ENCODE measurements at regions of chr15 and their contacts with region 1.

Region 1: GRCh38 chr15:72312605-72313447 is 7.1 kb downstream of the CELF6 start:
- DNase-seq: no peak
- H3K4me3 ChIP-seq: no peak overlapping the region
- H3K27ac ChIP-seq: no peak overlapping the region
- H3K27me3 ChIP-seq: peaks cover 18% of the 10 kb centered on the region
- CTCF ChIP-seq: peak; percentile 80

Region 2: DNA sequence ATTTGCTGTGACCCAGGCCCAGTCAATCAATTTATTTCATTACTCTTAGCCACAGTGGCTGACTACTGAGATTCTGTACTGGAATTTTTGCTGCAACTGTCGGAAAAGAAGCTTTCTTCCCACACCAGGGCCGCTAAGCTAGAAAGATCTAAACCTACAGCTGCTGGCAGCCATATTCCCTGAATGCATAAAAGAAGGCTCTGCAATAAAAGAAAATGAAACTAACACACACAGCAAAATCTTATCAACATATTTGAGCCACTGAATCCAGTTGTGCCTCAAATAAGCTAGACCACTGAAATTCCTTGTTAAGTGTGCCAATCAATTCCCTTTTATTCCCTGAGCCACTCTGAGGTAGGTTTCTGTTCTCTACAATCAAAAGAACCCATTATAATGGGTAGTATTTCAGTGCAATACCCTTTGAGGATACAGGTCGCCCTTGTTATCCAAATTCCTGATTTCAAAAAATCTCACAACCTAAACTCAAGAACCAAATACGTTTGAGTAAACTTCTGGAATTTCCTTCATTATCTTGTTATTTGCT is 255.2 kb before region 1 on chr15:
- CTCF ChIA-PET with region 1: no interaction called
- POLR2A ChIA-PET with region 1: no interaction called
- DNase-seq: no peak
- H3K4me3 ChIP-seq: peak overlapping the region; percentile 10; the same call in 1 of the 2 replicates
- H3K27ac ChIP-seq: no peak overlapping the region
- H3K27me3 ChIP-seq: no peaks in the 10 kb centered on the region
- CTCF ChIP-seq: no peak

Region 3: GRCh38 chr15:72168111-72168808 is 144.6 kb before region 1 on chr15:
- CTCF ChIA-PET with region 1: no interaction called
- POLR2A ChIA-PET with region 1: no interaction called
- DNase-seq: no peak
- H3K4me3 ChIP-seq: no peak overlapping the region
- H3K27ac ChIP-seq: no peak overlapping the region
- H3K27me3 ChIP-seq: peaks cover 42% of the 10 kb centered on the region
- CTCF ChIP-seq: no peak

Region 4: GRCh38 chr15:72339777-72340177 is 27.0 kb after region 1 on chr15:
- CTCF ChIA-PET with region 1: interaction called, 11 read pairs
- POLR2A ChIA-PET with region 1: no interaction called
- DNase-seq: peak; percentile 80
- H3K4me3 ChIP-seq: no peak overlapping the region
- H3K27ac ChIP-seq: peak overlapping the region; percentile 87
- H3K27me3 ChIP-seq: no peaks in the 10 kb centered on the region
- CTCF ChIP-seq: no peak

Region 5: GRCh38 chr15:72397796-72398588 is 85.2 kb after region 1 on chr15 and contains the start of gene TMEM202:
- CTCF ChIA-PET with region 1: no interaction called
- POLR2A ChIA-PET with region 1: no interaction called
- DNase-seq: no peak
- H3K4me3 ChIP-seq: no peak within 1 kb of the TSS
- H3K27ac ChIP-seq: no peak within 1 kb of the TSS
- H3K27me3 ChIP-seq: peaks cover 26% of the 10 kb centered on the region
- CTCF ChIP-seq: no peak
- polyA plus RNA-seq, gene TMEM202: not detected in 2 replicates